Heart right ventricle (tissue), 16 donors: ENCODE measurements at regions of chr14 and their contacts with region 1.

Region 1: DNA sequence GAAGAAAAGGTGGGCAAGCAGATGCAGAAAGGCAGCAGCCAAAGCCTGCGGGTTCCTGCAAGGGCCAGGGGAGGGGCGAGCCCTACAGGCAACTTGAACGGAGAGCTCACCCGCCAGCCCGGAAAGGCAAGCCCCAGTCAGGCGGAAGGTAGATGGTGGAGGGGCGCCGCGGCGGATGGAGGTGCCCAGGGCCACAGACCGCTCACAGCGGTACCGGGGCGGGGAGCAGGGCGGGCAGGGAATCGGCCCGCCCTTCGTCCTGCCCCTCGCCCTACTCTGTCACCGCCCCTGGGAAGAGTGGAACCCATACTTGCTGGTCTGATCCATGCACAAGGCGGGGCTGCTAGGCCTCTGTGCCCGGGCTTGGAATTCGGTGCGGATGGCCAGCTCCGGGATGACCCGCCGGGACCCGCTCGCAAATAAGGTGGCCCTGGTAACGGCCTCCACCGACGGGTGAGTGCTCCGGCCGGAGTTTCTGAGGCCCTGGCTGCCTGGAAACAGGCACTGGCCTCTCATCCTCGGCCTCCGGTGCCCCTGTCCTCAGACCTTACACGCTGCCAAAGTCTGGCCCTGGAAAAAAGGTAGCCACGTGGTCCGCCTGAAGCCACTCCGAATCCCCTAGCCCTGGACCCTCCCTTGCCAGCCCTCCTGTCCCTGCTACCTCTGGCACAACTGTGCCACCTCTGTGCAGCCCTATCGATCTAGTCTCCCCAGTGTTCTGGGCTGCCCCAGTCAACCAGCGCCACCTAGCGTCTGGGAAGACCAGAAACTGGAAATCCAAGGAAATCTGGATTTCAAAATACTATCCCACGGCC is at the start of gene DHRS4:
- DNase-seq: peak; percentile 81 to 87
- ATAC-seq: peak; percentile 97 to 99 (median 99)
- H3K4me3 ChIP-seq: peak within 1 kb of the TSS; percentile 35 to 98 (median 80)
- H3K27ac ChIP-seq: peak within 1 kb of the TSS; percentile 63 to 95 (median 90)
- H3K4me1 ChIP-seq: peaks cover 0 to 28% (median 9%) of the 10 kb centered on the region in 9 donors
- H3K27me3 ChIP-seq: no peaks in the 10 kb centered on the region
- CTCF ChIP-seq: peak; percentile 71 to 94 (median 89)
- total RNA-seq, gene DHRS4: 24.9 to 37.5 (median 30.7) TPM

Region 2: DNA sequence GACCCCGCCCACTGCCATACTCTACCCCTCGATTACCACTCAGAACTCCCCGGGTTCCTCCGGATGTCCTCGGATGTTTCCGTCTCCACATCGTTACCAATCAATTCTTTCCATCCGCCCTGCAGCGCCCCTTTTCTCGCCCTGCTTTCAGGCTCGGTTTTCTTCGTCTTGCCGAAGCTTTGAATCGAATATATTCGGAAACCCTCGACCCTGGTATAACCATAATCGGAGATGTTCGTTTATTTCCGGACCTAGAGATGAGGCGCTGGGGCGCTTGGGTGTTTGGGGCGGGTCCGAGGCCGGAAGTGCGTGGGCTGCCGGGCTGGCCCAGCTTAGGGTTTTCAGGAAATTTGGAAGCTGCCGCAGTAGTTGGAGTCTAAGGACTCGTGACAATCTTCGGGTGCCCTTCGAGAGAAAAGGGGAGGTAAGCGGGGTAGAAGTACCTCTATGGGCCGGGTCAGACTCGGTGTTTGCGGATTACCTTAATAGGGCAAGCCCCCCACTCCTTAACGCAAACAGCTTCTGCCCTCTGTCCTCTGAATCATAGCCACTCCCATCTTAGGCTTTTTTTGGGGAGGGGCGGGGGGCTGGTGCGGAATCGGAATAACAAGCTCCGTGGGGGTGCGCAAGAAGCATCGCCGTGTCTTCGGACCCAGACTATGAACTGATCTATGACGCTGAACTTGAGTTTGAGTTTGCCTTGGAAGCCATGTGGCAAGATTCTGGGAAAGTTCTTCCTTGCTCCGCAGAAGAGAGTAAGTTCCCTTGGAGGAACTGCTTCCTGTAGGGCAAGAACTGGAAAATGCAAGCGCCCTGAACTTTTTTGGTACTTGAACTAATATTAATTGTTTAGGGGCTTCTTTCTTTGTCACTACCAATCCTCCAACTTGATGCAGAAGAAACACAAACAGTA is 858.2 kb before region 1 on chr14 and contains the start of gene C14orf119:
- intact Hi-C with region 1: loop called in 1 of 10 experiments (anchors 5 kb)
- DNase-seq: peak; percentile 34 to 100
- ATAC-seq: peak; percentile 94 to 97 (median 96)
- H3K4me3 ChIP-seq: peak within 1 kb of the TSS; percentile 66 to 97 (median 76)
- H3K27ac ChIP-seq: peak within 1 kb of the TSS; percentile 92 to 99 (median 96)
- H3K4me1 ChIP-seq: peaks cover 8 to 62% (median 49%) of the 10 kb centered on the region in 9 donors
- H3K27me3 ChIP-seq: no peaks in the 10 kb centered on the region
- CTCF ChIP-seq: no peak
- total RNA-seq, gene C14orf119: 22.3 to 35.9 (median 28.4) TPM

Region 3: DNA sequence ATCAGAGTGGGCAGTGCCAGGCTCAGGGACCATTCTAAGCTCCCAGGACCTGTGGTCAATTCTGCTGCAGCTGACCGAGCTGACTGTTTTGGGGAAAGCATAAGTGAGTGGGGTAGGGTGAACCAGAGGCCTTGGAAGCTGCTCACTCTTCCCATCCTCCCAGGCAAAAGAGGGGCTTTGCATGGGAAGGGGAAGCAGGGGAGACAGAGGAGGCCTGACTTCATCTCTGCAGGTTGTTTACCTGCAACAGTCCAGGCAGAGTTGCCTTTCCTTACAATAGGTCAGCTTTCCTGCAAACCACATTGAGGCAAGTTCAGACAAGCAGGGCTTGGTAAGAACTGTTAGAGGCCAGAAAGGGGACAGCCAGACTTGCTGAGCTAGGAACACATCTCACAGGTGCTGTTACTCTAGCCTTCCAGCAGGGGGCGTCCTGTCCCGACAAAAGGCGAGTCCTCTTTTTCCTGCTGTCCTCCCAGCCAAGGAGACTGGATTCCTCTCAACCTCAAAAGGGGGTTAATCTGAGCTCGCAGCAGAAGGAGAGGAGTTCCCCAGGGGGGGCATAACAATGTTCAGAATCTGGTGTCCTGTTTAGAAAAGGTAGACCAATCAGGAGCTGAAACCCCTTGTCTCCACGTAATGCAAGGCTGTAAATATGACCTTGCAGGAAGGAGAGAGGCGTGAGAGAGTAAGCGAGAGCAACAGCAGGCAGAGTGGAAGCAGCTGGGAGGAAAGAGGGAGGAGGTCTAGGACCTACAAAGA is 321.8 kb before region 1 on chr14:
- intact Hi-C with region 1: loop called in 1 of 10 experiments (anchors 1 kb)
- DNase-seq: peak; percentile 72 to 82
- ATAC-seq: peak; percentile 78 to 96 (median 90)
- H3K4me3 ChIP-seq: peak overlapping the region in 5 of 10 donors; percentile 5 to 37 (median 24)
- H3K27ac ChIP-seq: no peak overlapping the region
- H3K4me1 ChIP-seq: peaks cover 0 to 15% (median 9%) of the 10 kb centered on the region in 9 donors
- H3K27me3 ChIP-seq: peaks cover 0 to 8% (median 0%) of the 10 kb centered on the region in 7 donors
- CTCF ChIP-seq: peak; percentile 80 to 97 (median 95)

Region 4: DNA sequence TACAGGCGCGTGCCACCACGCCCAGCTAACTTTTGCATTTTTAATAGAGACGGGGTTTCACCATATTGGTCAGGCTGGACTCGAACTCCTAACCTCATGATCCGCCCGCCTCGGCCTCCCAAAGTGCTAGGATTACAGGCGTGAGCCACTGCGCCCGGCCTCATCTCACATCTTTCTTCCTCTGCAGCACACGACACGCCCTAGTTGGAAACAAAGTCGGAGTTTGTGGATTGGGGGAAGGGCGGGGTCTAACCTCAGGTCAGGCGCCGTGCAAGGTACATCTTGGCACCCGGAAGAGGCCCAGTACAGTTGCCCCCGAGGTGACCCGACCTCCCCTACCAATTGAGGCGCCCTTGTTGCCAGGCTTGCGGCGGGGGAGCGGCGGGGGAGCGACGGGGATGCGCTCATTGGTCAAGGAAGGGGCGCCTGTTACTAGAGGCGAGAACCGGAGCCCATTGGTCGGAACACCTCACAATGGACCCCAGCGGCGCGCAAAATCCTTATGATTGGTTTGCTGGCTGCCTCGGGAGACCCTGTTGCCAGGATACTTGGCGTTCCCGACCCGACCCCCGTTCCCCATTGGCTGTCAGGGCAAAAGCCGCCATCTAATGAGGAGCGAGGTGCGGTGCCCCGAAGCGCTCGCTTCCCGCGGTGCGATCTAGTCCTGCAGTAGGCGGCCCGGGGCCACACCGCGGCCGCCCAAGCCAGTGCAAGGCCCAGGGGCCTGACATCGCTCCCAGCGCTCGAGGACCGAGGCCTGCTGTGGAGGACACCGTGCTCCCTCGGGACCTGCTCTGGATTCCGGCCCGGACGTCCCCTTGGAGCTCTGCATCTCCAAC is 218.0 kb after region 1 on chr14 and contains the start of gene REC8:
- intact Hi-C with region 1: no loop called
- DNase-seq: peak; percentile 65 to 74
- ATAC-seq: peak; percentile 45 to 81 (median 70)
- H3K4me3 ChIP-seq: peak within 1 kb of the TSS in 9 of 10 donors; percentile 1 to 52 (median 39)
- H3K27ac ChIP-seq: peak within 1 kb of the TSS in 1 of 10 donors; percentile 36
- H3K4me1 ChIP-seq: peaks cover 0 to 26% (median 11%) of the 10 kb centered on the region in 9 donors
- H3K27me3 ChIP-seq: no peaks in the 10 kb centered on the region
- CTCF ChIP-seq: no peak
- total RNA-seq, gene REC8: 2.5 to 7.0 (median 4.3) TPM